Endothelial cell of umbilical vein (primary cell): ENCODE measurements at regions of chr7 and their contacts with region 1.

Region 1: DNA sequence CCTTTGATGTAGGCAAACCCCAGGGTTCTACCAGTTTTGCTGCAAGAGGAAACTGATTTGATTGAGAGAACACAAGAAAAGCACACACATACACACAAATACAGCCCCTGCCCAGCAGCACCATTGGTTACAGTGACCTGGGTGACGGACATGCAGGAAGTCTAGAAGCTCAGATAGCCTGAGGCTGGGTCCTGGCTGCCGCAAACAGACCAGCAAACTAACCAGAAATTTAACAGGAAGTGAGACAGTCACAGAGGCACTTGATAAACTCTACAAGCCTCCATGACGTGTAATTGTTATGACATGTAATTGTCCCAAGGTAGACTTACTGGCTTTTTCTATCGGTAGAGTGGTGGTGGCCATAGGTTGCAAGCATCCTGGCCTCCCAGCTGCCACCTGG is 58.9 kb downstream of the PRKAR2B start:
- DNase-seq: peak; percentile 65
- H3K4me3 ChIP-seq: no peak overlapping the region
- H3K27ac ChIP-seq: peak overlapping the region; percentile 18
- H3K4me1 ChIP-seq: peaks cover 29% of the 10 kb centered on the region
- H3K27me3 ChIP-seq: no peaks in the 10 kb centered on the region
- CTCF ChIP-seq: no peak
- POLR2A ChIP-seq: no peak

Region 2: DNA sequence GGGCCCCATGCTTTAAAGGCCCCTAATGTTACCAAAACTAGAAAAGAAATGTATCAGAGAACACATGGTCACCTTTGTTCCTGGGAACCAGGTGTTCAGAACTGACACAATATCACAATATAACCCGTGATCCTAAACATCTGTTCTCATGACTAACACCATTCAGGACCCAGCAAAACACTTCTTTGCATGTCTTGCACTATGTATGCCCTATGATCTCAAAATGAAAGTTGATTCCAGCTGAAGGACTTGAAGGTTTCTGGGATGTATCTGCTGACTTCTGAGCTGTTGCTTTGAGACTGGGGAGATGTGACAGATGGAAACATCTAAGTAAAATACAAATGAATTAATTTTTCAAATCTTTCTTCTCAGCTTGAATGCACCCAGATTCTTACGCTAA is 275.7 kb before region 1 on chr7:
- CTCF ChIA-PET with region 1: no interaction called
- POLR2A ChIA-PET with region 1: no interaction called
- dilution Hi-C with region 1: no loop called
- intact Hi-C with region 1: no loop called
- DNase-seq: no peak
- H3K4me3 ChIP-seq: no peak overlapping the region
- H3K27ac ChIP-seq: no peak overlapping the region
- H3K4me1 ChIP-seq: no peaks in the 10 kb centered on the region
- H3K27me3 ChIP-seq: no peaks in the 10 kb centered on the region
- CTCF ChIP-seq: no peak
- POLR2A ChIP-seq: no peak

Region 3: DNA sequence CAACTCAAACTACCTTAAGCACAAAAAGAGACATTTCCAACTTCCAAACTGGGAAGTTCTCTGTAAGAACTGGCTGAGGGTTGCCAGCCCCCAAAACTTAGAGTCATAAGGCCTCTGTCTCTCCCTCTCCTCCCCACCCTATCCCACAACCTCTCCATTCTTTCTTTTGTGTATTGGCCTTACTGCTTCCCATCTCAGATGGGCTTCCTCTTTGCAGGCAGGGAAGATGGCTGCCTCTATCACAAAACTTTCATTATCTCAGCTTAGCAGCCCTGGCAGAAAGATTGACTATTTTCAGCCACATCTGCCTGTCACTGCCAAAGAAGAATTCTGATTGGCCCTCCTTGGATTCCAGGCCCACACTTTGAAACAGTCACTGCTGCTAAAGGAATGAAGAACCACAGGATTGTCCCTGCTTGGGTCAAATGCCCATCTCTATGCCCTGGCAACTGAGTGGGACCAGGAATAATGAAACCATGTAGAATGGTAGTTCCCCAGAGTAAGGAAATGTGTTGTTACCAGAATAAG is 116.8 kb before region 1 on chr7:
- CTCF ChIA-PET with region 1: no interaction called
- POLR2A ChIA-PET with region 1: no interaction called
- dilution Hi-C with region 1: no loop called
- intact Hi-C with region 1: no loop called
- DNase-seq: no peak
- H3K4me3 ChIP-seq: no peak overlapping the region
- H3K27ac ChIP-seq: no peak overlapping the region
- H3K4me1 ChIP-seq: no peaks in the 10 kb centered on the region
- H3K27me3 ChIP-seq: no peaks in the 10 kb centered on the region
- CTCF ChIP-seq: no peak
- POLR2A ChIP-seq: no peak

Region 4: GRCh38 chr7:107090457-107090856 is 12.9 kb before region 1 on chr7:
- CTCF ChIA-PET with region 1: interaction called, 12 read pairs
- POLR2A ChIA-PET with region 1: interaction called, 3 read pairs
- dilution Hi-C with region 1: no loop called
- intact Hi-C with region 1: no loop called
- DNase-seq: peak; percentile 42
- H3K4me3 ChIP-seq: no peak overlapping the region
- H3K27ac ChIP-seq: no peak overlapping the region
- H3K4me1 ChIP-seq: peaks cover 17% of the 10 kb centered on the region
- H3K27me3 ChIP-seq: no peaks in the 10 kb centered on the region
- CTCF ChIP-seq: no peak
- POLR2A ChIP-seq: no peak